Activated CD4-positive, alpha-beta T cell treated with anti-CD3 and anti-CD28 coated beads, Interleukin-2, amount 10 ng/mL, durations not matched to agents 24 days and 14 days (primary cell): ENCODE measurements at regions of chr11 and their contacts with region 1.

Region 1: GRCh38 chr11:14809466-14809865 is 82.6 kb downstream of the CYP2R1 start:
- DNase-seq: no peak
- H3K4me3 Mint-ChIP-seq: no peak overlapping the region
- H3K27ac Mint-ChIP-seq: peak overlapping the region; percentile 12
- H3K4me1 Mint-ChIP-seq: peaks cover 4% of the 10 kb centered on the region
- H3K27me3 Mint-ChIP-seq: no peaks in the 10 kb centered on the region

Region 2: GRCh38 chr11:14826600-14826999 is 17.1 kb after region 1 on chr11:
- intact Hi-C with region 1: loop called (anchors 1 kb)
- DNase-seq: no peak
- H3K4me3 Mint-ChIP-seq: no peak overlapping the region
- H3K27ac Mint-ChIP-seq: no peak overlapping the region
- H3K4me1 Mint-ChIP-seq: peaks cover 9% of the 10 kb centered on the region
- H3K27me3 Mint-ChIP-seq: no peaks in the 10 kb centered on the region